Left cardiac atrium (tissue), 4 donors: ENCODE measurements at regions of chr11 and their contacts with region 1.

Region 1: GRCh38 chr11:59802639-59803176 is 7.9 kb downstream of the MRPL16 start:
- DNase-seq: no peak
- ATAC-seq: peak; percentile 68 to 79

Region 2: DNA sequence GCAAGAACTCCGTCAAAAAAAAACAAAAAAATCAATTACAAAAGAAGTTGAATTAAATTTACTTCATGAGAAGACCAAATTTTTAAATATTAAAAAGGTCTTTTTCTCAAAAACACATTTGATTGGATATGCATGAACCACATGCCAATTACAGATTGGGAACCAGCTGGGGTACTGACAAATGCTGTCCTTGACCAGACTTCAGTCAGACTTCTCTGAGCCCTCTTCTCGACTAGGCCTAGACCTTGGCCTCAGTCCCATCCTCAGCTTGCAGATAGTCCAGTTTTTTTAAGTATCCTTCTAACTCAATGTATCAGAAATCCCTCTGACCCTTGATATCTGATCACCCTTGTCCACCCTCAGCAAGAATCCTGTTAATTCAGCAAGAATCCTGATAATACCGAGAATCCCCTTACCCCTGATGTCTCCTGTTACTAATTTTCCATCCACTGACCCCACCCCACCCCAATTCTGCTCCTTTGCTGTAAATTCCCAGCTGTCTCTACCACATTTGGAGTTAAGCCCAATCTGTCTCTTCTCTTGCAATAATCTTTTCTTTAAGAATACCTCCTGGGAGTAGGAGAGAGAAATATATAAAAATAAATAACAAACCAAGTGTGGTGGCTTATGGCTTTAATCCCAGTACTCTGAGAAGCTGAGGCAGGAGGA is 260.4 kb before region 1 on chr11:
- intact Hi-C with region 1: loop called in 1 of 2 experiments (anchors 2 kb)
- DNase-seq: no peak
- ATAC-seq: no peak

Region 3: GRCh38 chr11:59668950-59669610 is 133.6 kb before region 1 on chr11 and contains the start of gene PATL1:
- intact Hi-C with region 1: loop called in 1 of 2 experiments (anchors 10 kb)
- DNase-seq: peak; percentile 100
- ATAC-seq: peak; percentile 97
- total RNA-seq, gene PATL1: 21.6 to 28.2 TPM

Region 4: DNA sequence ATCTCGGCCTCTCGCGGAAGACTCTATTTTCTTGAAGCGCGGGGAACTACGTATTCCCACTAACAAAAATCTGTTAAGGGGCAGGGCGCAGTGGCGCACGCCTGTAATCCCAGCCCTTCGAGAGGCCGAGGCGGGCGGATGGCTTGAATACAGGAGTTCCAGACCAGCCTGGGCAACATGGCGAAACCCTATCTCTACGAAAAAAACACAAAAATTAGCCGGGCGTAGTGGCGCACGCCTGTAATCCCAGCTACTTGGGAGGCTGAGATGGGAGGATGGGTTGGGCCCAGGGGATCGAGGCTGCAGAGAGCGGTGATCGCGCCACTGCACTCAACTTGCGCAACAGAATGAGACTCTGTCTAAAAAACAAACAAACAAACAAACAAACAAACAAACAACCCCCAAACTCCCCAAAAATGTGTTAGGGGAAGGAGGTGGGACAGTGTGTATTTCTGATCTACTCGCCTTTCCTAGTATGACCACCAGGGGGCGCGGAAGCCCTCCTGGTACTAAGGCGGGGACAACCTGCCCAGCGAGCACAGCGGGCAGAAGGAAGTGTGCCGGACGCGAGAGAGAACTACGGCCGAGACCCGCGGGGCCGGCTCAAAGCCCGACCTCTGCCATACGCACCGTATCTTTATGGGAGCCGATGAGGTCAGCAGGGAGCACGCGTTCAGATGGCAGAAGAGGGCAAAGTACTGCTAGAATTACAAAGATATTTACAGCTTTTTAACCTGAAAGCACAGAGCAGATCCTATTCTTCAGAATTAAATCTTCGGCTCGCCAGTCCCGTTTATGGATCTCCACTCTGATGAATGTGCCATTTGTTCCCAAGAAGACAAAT is 48.8 kb before region 1 on chr11:
- intact Hi-C with region 1: loop called (anchors 1 to 2 kb)
- DNase-seq: peak; percentile 90
- ATAC-seq: peak; percentile 69 to 70